Common myeloid progenitor, CD34-positive (primary cell): ENCODE measurements at regions of chr1 and their contacts with region 1.

Region 1: GRCh38 chr1:33055210-33056008 is 18.7 kb upstream of the AK2 start:
- DNase-seq: peak; percentile 69 to 79 (median 74)
- H3K4me3 ChIP-seq: no peak overlapping the region
- H3K27ac ChIP-seq: no peak overlapping the region
- H3K4me1 ChIP-seq: peaks cover 2 to 10% (median 3%) of the 10 kb centered on the region in 4 experiments
- H3K27me3 ChIP-seq: no peaks in the 10 kb centered on the region

Region 2: DNA sequence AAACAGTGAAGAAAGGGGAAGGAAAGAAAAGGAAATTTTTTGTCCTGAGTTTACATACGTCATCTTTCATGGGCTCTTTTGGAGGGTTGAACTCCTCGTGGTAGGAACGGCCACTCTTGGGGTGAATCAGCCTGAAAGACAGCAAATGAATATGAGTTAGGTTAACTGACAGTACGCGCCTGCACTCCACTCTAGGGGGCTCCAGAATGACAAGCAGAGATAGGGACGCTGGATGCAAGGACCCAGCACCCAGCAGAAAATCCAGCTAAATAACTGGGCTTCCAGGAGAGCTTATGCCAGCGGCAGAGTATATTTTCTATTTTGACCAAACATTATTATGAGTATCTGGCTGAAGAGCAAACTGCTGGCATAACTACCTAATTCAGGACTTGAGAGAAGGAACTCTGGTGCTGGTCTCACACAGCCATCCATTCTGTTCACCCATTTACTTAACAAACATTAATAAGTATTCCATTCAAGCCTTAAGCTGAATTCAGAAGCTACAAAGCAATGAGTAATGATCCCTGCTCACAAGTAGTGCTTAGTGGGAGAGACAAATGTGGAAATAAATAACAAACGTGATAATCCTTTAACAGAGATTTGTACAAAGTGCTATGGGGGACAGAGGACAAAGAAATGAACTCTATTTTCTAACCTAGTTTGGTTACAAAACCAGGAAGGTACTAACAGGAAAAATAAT is 40.8 kb before region 1 on chr1:
- CTCF ChIA-PET with region 1: interaction called, 11 read pairs
- POLR2A ChIA-PET with region 1: no interaction called
- DNase-seq: no peak
- H3K4me3 ChIP-seq: no peak overlapping the region
- H3K27ac ChIP-seq: peak overlapping the region in 1 of 2 experiments; percentile 39
- H3K4me1 ChIP-seq: no peaks in the 10 kb centered on the region
- H3K27me3 ChIP-seq: no peaks in the 10 kb centered on the region

Region 3: GRCh38 chr1:33045246-33045645 is 10.2 kb before region 1 on chr1:
- CTCF ChIA-PET with region 1: interaction called, 15 read pairs
- POLR2A ChIA-PET with region 1: no interaction called
- DNase-seq: no peak
- H3K4me3 ChIP-seq: no peak overlapping the region
- H3K27ac ChIP-seq: no peak overlapping the region
- H3K4me1 ChIP-seq: peaks cover 9 to 29% (median 12%) of the 10 kb centered on the region in 4 experiments
- H3K27me3 ChIP-seq: no peaks in the 10 kb centered on the region

Region 4: DNA sequence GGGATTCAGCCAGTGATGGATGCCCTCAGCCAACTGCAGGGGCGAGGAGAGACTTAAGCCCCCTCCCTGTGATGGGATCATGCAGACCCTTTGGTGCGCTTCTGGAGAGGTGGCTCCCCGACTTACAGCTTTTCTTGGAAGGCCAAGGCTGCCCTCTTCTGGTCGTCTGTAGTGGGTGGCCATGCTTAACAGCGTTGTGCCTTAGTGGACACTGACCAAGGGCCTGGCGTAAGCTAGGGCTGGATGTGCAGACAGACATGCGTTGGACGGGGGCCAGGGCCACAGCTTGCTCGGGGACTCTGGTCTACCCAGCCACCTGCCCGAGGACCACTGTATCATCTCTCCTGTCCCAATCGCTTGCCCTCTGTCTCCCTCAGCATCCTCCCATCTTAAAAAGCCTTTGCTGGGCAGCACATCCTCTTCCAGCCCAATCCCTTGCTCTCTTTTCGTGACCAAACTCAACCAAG is 31.0 kb after region 1 on chr1:
- CTCF ChIA-PET with region 1: interaction called, 12 read pairs
- POLR2A ChIA-PET with region 1: no interaction called
- DNase-seq: peak; percentile 67 to 81 (median 77)
- H3K4me3 ChIP-seq: no peak overlapping the region
- H3K27ac ChIP-seq: no peak overlapping the region
- H3K4me1 ChIP-seq: peaks cover 5 to 29% (median 18%) of the 10 kb centered on the region in 4 experiments
- H3K27me3 ChIP-seq: peaks cover 0 to 37% (median 23%) of the 10 kb centered on the region in 5 experiments

Region 5: DNA sequence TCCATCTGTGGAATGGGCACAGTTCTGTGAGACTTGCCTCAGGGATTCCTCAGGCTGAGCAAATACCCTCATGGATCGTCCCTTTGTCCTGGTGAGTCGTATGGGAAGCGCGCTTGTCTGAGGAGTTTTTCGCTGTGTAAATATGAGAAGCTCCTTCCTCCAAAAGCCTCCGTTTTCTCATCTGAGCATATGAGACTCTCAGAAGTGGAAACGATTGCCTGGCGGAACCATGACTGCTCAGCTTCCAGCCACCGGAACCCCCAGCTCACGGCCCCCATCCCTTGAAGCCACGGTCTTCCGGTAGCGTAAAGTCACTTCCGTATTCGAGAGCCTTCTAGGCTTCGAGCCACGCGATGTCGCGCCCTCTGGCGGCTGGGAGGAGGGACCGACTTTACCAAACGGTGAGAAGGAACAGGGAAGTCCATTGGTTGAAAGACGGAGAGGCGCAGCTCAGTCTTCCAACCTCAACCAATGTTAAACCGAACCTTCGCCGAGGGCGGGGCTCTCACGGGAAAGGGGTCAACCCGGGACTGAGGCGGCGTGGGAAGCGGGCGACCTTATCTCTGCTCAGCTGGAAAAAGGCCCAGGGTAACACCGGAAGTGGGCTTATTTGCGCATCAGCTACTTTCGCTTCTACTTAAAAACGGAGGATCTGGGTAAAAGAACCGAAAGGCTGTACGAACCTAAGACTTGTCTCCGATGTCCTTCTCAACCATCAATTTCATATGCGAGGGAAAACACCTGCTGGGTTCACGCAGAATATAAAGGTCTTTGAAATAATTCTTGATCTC is 71.8 kb after region 1 on chr1:
- CTCF ChIA-PET with region 1: no interaction called
- POLR2A ChIA-PET with region 1: no interaction called
- DNase-seq: peak; percentile 100
- H3K4me3 ChIP-seq: peak overlapping the region; percentile 57 to 98 (median 87)
- H3K27ac ChIP-seq: peak overlapping the region; percentile 78 to 90
- H3K4me1 ChIP-seq: peaks cover 10 to 28% (median 16%) of the 10 kb centered on the region in 4 experiments
- H3K27me3 ChIP-seq: no peaks in the 10 kb centered on the region

Region 6: GRCh38 chr1:33211972-33212371 is 156.6 kb after region 1 on chr1:
- CTCF ChIA-PET with region 1: no interaction called
- POLR2A ChIA-PET with region 1: no interaction called
- DNase-seq: no peak
- H3K4me3 ChIP-seq: no peak overlapping the region
- H3K27ac ChIP-seq: no peak overlapping the region
- H3K4me1 ChIP-seq: no peaks in the 10 kb centered on the region
- H3K27me3 ChIP-seq: no peaks in the 10 kb centered on the region